SK-N-SH (cell line): ENCODE measurements at regions of chr16 and their contacts with region 1.

Region 1: DNA sequence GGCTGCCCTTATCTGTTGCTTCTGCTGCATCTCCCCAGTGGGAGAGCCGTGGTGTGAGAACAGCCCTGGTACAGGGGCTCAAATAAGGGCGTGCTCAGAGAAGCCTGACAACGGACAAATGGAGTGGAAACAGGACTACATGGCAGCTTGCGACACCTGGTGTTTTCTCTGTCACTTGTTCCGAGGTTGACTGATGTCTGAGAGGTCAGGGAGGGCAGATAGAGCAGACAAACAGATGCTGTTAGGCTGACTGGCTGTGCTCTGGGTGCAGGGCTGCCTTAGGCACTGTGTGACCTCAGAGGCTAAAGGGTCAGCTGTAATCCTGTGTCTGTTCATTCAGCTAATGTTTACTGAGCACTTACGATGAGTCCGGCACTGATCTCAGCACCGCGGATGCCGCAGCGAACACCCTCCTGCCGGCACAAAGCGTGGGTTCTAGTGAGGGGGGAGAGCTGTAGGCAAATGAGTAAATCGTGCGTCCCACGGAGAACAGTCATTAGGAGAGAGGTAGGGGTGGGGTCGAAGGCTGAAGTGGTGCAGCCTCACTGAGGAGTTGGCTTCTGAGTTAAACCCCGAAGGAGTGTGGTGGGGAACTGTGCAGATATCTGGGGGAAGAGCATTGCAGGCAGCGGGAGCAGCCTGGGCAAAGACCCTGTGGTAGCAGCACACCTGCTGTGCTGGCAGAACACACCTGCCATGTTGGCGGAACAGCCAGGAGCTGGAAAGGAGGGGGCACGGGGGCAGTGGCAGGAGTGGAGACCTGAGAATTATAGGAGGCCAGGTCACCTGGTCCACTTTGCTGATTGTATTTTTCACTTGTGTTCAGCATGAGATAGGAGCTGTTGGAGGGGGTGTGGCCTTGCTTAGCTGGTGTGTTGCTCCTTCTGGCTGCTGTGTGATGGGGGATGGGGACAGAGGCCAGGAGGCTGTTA is 35.0 kb downstream of the GPT2 start:
- DNase-seq: no peak
- H3K4me3 ChIP-seq: no peak overlapping the region
- H3K27ac ChIP-seq: no peak overlapping the region
- H3K4me1 ChIP-seq: no peaks in the 10 kb centered on the region; a peak in 1 of 4 replicates
- H3K27me3 ChIP-seq: no peaks in the 10 kb centered on the region
- CTCF ChIP-seq: no peak
- EP300 ChIP-seq: no peak
- RAD21 ChIP-seq: no peak

Region 2: GRCh38 chr16:46929378-46930332 is 10.5 kb after region 1 on chr16:
- CTCF ChIA-PET with region 1: interaction called, 26 read pairs
- POLR2A ChIA-PET with region 1: no interaction called
- DNase-seq: peak; percentile 92
- H3K4me3 ChIP-seq: no peak overlapping the region; a peak in 1 of 4 replicates
- H3K27ac ChIP-seq: no peak overlapping the region
- H3K4me1 ChIP-seq: no peaks in the 10 kb centered on the region
- H3K27me3 ChIP-seq: no peaks in the 10 kb centered on the region
- CTCF ChIP-seq: peak; percentile 91
- EP300 ChIP-seq: no peak
- RAD21 ChIP-seq: peak; percentile 65

Region 3: DNA sequence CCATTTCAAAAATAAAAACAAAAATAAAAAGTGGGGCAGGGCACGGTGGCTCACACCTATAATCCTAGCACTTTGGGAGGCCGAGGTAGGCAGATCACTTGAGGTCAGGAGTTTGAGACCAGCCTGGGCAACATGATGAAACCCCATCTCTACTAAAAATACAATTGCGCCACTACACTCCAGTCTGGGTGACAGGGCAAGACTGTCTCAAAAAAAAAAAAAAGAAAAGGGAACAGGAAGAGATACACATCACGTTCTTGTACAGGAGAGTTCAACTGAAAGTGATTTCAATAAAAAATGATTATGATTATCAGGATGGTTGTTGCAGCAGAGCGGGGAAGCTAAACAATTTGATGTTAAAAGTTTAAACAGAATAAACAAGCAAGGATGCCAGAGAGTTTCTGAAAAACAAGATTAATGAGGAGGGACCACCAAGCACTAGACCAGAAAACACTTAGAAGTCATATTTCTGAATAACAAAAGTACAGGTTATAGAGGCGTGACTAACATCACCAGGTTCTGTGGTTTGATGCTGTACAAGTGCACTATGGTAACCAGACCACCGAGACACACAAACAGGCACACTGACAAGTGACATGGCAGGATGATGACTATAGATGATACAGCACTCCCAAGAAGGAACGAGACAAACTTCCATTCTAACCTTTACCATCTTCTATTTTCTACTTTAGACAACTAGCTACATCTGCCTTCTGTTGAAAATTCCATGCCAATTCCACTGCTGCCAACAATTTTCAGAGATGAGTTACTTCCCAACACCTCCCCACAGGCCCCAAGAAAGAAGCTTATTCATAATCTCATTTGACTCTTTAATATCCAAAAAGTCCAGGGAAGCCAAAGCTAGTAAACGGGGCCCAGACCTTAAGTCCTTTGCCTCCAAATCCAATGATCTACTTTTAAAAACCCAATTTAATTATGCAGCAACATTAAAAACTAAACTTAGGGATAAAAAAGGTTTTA is 42.5 kb after region 1 on chr16:
- CTCF ChIA-PET with region 1: no interaction called
- POLR2A ChIA-PET with region 1: no interaction called
- DNase-seq: no peak
- H3K4me3 ChIP-seq: no peak overlapping the region
- H3K27ac ChIP-seq: peak overlapping the region in 1 of 2 experiments; percentile 39; a peak in 2 of 4 replicates
- H3K4me1 ChIP-seq: peaks cover 0 to 10% of the 10 kb centered on the region in 2 experiments; a peak in 1 of 4 replicates
- H3K27me3 ChIP-seq: no peaks in the 10 kb centered on the region
- CTCF ChIP-seq: no peak
- EP300 ChIP-seq: no peak
- RAD21 ChIP-seq: no peak

Region 4: GRCh38 chr16:47096297-47096696 is 177.2 kb after region 1 on chr16:
- CTCF ChIA-PET with region 1: no interaction called
- POLR2A ChIA-PET with region 1: no interaction called
- DNase-seq: no peak
- H3K4me3 ChIP-seq: no peak overlapping the region
- H3K27ac ChIP-seq: no peak overlapping the region
- H3K4me1 ChIP-seq: no peaks in the 10 kb centered on the region
- H3K27me3 ChIP-seq: no peaks in the 10 kb centered on the region
- CTCF ChIP-seq: no peak
- EP300 ChIP-seq: no peak
- RAD21 ChIP-seq: no peak

Region 5: DNA sequence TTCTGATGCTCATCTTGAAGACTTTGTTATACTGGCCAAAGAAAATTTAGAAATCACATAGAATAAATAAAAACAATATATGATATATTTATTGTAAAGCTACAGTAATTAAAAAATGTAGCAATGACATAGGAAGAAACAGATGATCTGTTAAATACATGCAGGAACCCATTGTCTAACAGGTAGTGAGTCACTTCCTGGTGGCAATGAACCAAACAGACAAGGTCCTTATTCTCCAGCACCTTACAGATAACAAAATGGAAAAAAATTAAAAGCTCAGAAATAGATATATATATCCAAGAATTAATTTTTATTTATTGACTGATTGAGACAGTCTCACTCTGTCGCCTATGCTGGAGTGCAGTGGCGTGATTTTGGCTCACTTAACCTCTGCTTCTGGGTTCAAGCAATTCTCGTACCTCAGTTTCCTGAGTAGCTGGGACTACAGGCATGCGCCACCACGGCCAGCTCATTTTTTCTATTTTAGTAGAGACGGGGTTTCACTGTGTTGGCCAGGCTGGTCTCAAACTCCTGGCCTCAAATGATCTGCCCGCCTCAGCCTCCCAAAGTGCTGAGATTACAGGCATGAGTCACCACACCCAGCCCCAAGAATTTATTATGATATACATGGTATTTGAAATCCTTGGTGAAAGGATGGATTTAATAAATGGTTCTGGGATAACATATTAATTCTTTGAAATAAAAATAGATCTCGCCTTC is 217.1 kb after region 1 on chr16:
- CTCF ChIA-PET with region 1: no interaction called
- POLR2A ChIA-PET with region 1: no interaction called
- DNase-seq: no peak
- H3K4me3 ChIP-seq: no peak overlapping the region
- H3K27ac ChIP-seq: no peak overlapping the region
- H3K4me1 ChIP-seq: peaks cover 8 to 10% of the 10 kb centered on the region in 2 experiments
- H3K27me3 ChIP-seq: no peaks in the 10 kb centered on the region
- CTCF ChIP-seq: no peak
- EP300 ChIP-seq: no peak
- RAD21 ChIP-seq: no peak